ENCODE measurements at regions of chr1 and their contacts with region 1.

Region 1: GRCh38 chr1:109630081-109630897 is 10.7 kb downstream of the AMPD2 start:
- DNase-seq: no peak
- ATAC-seq: no peak

Region 2: DNA sequence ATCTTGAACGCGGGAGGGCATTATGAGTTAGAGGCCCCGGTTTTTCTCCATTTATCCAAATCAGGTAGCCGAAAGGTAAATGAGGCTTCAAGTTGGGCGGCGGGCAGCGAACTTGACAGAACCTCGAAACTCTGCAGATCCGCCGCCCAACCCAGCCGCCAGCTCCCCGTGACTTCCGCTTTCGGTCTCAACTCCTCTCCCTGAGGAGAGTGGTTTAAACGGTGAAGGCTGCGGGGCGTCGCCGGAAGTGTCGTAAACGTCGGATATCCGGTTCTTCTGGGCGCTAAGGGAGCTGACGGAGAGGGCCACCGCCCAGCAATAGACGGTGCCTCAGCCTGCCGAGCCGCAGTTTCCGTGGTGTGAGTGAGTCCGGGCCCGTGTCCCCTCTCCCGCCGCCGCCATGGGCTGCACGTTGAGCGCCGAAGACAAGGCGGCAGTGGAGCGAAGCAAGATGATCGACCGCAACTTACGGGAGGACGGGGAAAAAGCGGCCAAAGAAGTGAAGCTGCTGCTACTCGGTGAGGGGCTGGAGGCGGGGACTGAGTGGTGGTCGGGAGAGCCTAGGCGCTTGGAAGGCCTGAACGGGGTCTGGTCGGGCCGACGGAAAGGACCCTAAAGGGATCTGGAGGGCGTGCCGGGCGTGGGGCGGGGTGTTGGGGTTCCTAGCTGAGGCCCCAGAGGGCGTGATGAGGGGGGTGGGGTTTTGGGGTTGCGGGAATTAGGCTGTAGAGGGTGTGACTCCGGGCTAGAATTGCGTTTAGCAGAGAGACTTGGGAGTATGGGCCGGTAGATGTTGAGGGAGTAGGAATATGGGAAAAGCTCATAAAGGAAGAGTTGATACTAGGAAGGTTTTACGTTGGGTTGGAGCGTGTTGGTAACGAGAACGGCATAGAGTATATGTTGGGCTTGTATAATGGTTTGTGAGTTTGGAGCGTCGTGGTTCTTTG is 81.7 kb before region 1 on chr1 and contains the start of gene GNAI3:
- intact Hi-C with region 1: loop called (anchors 5 kb)
- DNase-seq: peak; percentile 97
- ATAC-seq: peak; percentile 98
- total RNA-seq, gene GNAI3: 7.0 TPM

Region 3: GRCh38 chr1:109559995-109560394 is 70.3 kb before region 1 on chr1:
- intact Hi-C with region 1: no loop called
- DNase-seq: no peak
- ATAC-seq: no peak

Region 4: GRCh38 chr1:109931189-109931731 is 301.0 kb after region 1 on chr1:
- intact Hi-C with region 1: no loop called
- DNase-seq: peak; percentile 88
- ATAC-seq: peak; percentile 69

Measured in sciatic nerve (tissue), 2 donors.